Activated CD8-positive, alpha-beta memory T cell treated with anti-CD3 and anti-CD28 coated beads, Interleukin-2, amount 10 ng/mL, durations not matched to agents 7 days and 5 days (primary cell): ENCODE measurements at regions of chr2 and their contacts with region 1.

Region 1: DNA sequence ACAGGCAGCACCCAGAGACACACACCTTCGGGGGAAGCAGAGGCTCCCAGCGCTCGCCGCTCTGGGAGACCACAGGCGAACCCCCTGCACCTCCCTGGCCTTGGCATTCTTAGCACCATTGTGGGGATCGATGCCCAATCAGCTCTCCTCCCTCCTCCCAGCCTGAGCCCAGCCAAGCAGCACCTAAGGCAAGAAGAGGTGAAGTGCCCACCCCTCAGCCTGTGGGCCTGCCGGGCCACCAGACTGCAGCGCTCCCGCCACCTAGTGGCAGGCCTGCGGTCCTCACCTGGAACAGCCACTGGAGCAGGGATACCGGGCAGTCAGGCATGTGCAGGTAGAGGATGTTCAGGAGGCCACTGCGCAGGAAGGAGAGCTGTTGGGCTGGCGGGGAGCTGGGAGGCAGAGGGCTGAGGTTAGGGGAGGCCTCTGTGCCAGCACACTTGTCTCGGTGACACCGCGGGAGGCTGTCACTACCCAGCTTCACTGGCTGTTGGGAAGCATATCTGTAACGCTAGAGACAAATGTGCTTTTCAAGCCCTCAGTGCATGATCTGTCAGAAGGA is 35.2 kb downstream of the FAM178B start:
- DNase-seq: peak; percentile 81
- ATAC-seq: peak; percentile 87
- H3K4me3 Mint-ChIP-seq: no peak overlapping the region
- H3K27ac Mint-ChIP-seq: no peak overlapping the region
- H3K4me1 Mint-ChIP-seq: peaks cover 26% of the 10 kb centered on the region
- H3K27me3 Mint-ChIP-seq: peaks cover 13% of the 10 kb centered on the region

Region 2: GRCh38 chr2:96940001-96940615 is 11.1 kb before region 1 on chr2:
- CTCF ChIA-PET with region 1: interaction called, 46 read pairs
- DNase-seq: no peak
- ATAC-seq: no peak
- H3K4me3 Mint-ChIP-seq: no peak overlapping the region
- H3K27ac Mint-ChIP-seq: no peak overlapping the region
- H3K4me1 Mint-ChIP-seq: peaks cover 19% of the 10 kb centered on the region
- H3K27me3 Mint-ChIP-seq: peaks cover 19% of the 10 kb centered on the region